ENCODE measurements at regions of chr5 and their contacts with region 1.

Region 1: GRCh38 chr5:96614110-96614691 is 48.0 kb upstream of the CAST start:
- DNase-seq: peak in 11 of 14 experiments; percentile 10 to 75 (median 31)
- ATAC-seq: peak; percentile 43
- H3K4me3 ChIP-seq: no peak overlapping the region
- H3K4me3 Mint-ChIP-seq: no peak overlapping the region
- H3K27ac ChIP-seq: no peak overlapping the region
- H3K27ac Mint-ChIP-seq: no peak overlapping the region
- H3K4me1 ChIP-seq: peaks cover 6% of the 10 kb centered on the region
- H3K4me1 Mint-ChIP-seq: no peaks in the 10 kb centered on the region
- H3K27me3 ChIP-seq: no peaks in the 10 kb centered on the region
- H3K27me3 Mint-ChIP-seq: peaks cover 5% of the 10 kb centered on the region
- CTCF ChIP-seq: peak; percentile 70

Region 2: GRCh38 chr5:96601811-96602244 is 12.4 kb before region 1 on chr5:
- CTCF ChIA-PET with region 1: interaction called, 12 read pairs
- POLR2A ChIA-PET with region 1: no interaction called
- intact Hi-C with region 1: no loop called
- DNase-seq: peak in 13 of 14 experiments; percentile 8 to 83 (median 27)
- ATAC-seq: peak; percentile 87
- H3K4me3 ChIP-seq: no peak overlapping the region
- H3K4me3 Mint-ChIP-seq: no peak overlapping the region
- H3K27ac ChIP-seq: no peak overlapping the region
- H3K27ac Mint-ChIP-seq: no peak overlapping the region
- H3K4me1 ChIP-seq: peaks cover 3% of the 10 kb centered on the region
- H3K4me1 Mint-ChIP-seq: no peaks in the 10 kb centered on the region
- H3K27me3 ChIP-seq: peaks cover 0 to 5% of the 10 kb centered on the region in 2 experiments
- H3K27me3 Mint-ChIP-seq: peaks cover 18% of the 10 kb centered on the region
- CTCF ChIP-seq: peak; percentile 81

Region 3: GRCh38 chr5:96687812-96688453 is 73.7 kb after region 1 on chr5:
- CTCF ChIA-PET with region 1: interaction called, 7 read pairs
- POLR2A ChIA-PET with region 1: no interaction called
- intact Hi-C with region 1: loop called (anchors 1 to 2 kb)
- DNase-seq: peak in 3 of 14 experiments; percentile 44 to 59 (median 59)
- ATAC-seq: peak; percentile 99
- H3K4me3 ChIP-seq: no peak overlapping the region
- H3K4me3 Mint-ChIP-seq: peak overlapping the region; percentile 48
- H3K27ac ChIP-seq: no peak overlapping the region
- H3K27ac Mint-ChIP-seq: no peak overlapping the region
- H3K4me1 ChIP-seq: peaks cover 3% of the 10 kb centered on the region
- H3K4me1 Mint-ChIP-seq: peaks cover 30% of the 10 kb centered on the region
- H3K27me3 ChIP-seq: no peaks in the 10 kb centered on the region
- H3K27me3 Mint-ChIP-seq: no peaks in the 10 kb centered on the region
- CTCF ChIP-seq: peak; percentile 68

Region 4: DNA sequence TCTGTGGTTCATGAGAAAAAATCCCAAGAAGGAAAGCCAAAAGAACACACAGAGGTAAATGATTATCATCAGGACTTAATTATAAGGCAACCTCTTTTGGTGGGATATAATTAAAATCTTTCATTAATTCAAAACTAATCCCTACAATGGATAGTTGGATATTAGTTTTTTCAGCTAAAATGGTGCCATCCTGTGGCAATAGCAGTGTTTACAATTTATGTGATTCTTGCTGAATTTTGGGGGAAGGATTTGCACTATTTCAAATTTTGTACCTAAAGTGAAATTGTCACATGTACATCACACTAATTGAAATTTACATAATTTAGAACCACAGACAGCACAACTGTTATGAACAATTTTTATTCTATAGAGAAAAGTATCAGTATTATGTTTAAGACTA is 115.0 kb after region 1 on chr5:
- CTCF ChIA-PET with region 1: interaction called, 6 read pairs
- POLR2A ChIA-PET with region 1: no interaction called
- intact Hi-C with region 1: loop called (anchors 1 to 2 kb)
- DNase-seq: no peak
- ATAC-seq: no peak
- H3K4me3 ChIP-seq: no peak overlapping the region
- H3K4me3 Mint-ChIP-seq: no peak overlapping the region
- H3K27ac ChIP-seq: no peak overlapping the region
- H3K27ac Mint-ChIP-seq: no peak overlapping the region
- H3K4me1 ChIP-seq: no peaks in the 10 kb centered on the region
- H3K4me1 Mint-ChIP-seq: peaks cover 4% of the 10 kb centered on the region
- H3K27me3 ChIP-seq: no peaks in the 10 kb centered on the region
- H3K27me3 Mint-ChIP-seq: no peaks in the 10 kb centered on the region
- CTCF ChIP-seq: peak; percentile 25

Region 5: GRCh38 chr5:97162045-97162444 is 547.8 kb after region 1 on chr5:
- CTCF ChIA-PET with region 1: no interaction called
- POLR2A ChIA-PET with region 1: no interaction called
- intact Hi-C with region 1: loop called (anchors 1 to 5 kb)
- DNase-seq: peak in 12 of 14 experiments; percentile 16 to 82 (median 34)
- ATAC-seq: peak; percentile 49
- H3K4me3 ChIP-seq: no peak overlapping the region
- H3K4me3 Mint-ChIP-seq: no peak overlapping the region
- H3K27ac ChIP-seq: no peak overlapping the region
- H3K27ac Mint-ChIP-seq: no peak overlapping the region
- H3K4me1 ChIP-seq: no peaks in the 10 kb centered on the region
- H3K4me1 Mint-ChIP-seq: peaks cover 14% of the 10 kb centered on the region
- H3K27me3 ChIP-seq: no peaks in the 10 kb centered on the region
- H3K27me3 Mint-ChIP-seq: no peaks in the 10 kb centered on the region
- CTCF ChIP-seq: peak; percentile 98

Region 6: GRCh38 chr5:97400537-97400936 is 786.3 kb after region 1 on chr5:
- CTCF ChIA-PET with region 1: no interaction called
- POLR2A ChIA-PET with region 1: no interaction called
- intact Hi-C with region 1: no loop called
- DNase-seq: no peak
- ATAC-seq: no peak
- H3K4me3 ChIP-seq: no peak overlapping the region
- H3K4me3 Mint-ChIP-seq: no peak overlapping the region
- H3K27ac ChIP-seq: no peak overlapping the region
- H3K27ac Mint-ChIP-seq: no peak overlapping the region
- H3K4me1 ChIP-seq: no peaks in the 10 kb centered on the region
- H3K4me1 Mint-ChIP-seq: no peaks in the 10 kb centered on the region
- H3K27me3 ChIP-seq: no peaks in the 10 kb centered on the region
- H3K27me3 Mint-ChIP-seq: no peaks in the 10 kb centered on the region
- CTCF ChIP-seq: no peak

Measured in CD4-positive, alpha-beta T cell (primary cell).